CD4-positive, alpha-beta T cell (primary cell): ENCODE measurements at regions of chr13 and their contacts with region 1.

Region 1: DNA sequence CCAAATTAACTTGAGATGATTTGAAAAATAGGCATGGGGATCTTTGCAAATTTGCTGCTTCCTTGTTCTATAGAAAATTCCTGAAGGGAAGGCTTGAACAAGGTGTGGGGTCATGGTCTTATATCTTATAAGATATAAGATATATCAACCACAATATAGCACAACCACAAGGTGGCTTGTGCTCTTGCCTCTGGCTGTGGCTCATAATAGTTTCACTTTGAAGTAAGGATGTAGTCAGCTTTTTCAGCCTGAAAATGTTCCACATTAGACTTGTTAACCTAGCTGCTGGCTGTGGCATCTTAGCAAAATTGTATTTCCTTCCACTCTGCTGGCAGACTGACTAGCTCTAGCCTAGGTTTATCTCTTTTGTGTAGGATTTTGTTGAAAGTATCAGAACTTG is 169.7 kb downstream of the KLF5 start:
- DNase-seq: peak in 4 of 14 experiments; percentile 16 to 71 (median 52)
- ATAC-seq: peak; percentile 67
- H3K4me3 ChIP-seq: no peak overlapping the region
- H3K4me3 Mint-ChIP-seq: no peak overlapping the region
- H3K27ac ChIP-seq: peak overlapping the region in 1 of 2 donors; percentile 32
- H3K27ac Mint-ChIP-seq: peak overlapping the region; percentile 79
- H3K4me1 ChIP-seq: peaks cover 32% of the 10 kb centered on the region
- H3K4me1 Mint-ChIP-seq: peaks cover 57% of the 10 kb centered on the region
- H3K27me3 ChIP-seq: no peaks in the 10 kb centered on the region
- H3K27me3 Mint-ChIP-seq: no peaks in the 10 kb centered on the region
- CTCF ChIP-seq: peak; percentile 28

Region 2: DNA sequence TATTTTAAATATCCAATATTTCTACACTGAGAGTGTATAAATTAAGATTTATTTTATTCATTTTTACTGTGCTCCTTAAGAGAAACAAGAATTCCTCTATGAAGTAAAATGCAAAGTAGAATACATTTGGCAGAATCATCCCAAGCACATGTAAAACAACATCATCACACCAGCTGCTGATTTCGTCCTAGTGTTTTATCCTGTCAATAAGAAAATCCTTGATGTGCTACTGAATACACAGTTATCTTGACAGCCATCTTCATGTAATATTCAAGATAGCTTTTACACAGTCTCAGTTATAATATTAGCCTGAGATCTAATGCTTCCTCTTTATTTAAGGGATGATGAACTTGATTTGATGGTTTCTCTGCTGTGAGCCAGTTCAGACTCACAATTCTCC is 783.5 kb before region 1 on chr13:
- CTCF ChIA-PET with region 1: no interaction called
- POLR2A ChIA-PET with region 1: no interaction called
- intact Hi-C with region 1: no loop called
- DNase-seq: no peak
- ATAC-seq: no peak
- H3K4me3 ChIP-seq: no peak overlapping the region
- H3K4me3 Mint-ChIP-seq: no peak overlapping the region
- H3K27ac ChIP-seq: no peak overlapping the region
- H3K27ac Mint-ChIP-seq: no peak overlapping the region
- H3K4me1 ChIP-seq: no peaks in the 10 kb centered on the region
- H3K4me1 Mint-ChIP-seq: no peaks in the 10 kb centered on the region
- H3K27me3 ChIP-seq: no peaks in the 10 kb centered on the region
- H3K27me3 Mint-ChIP-seq: no peaks in the 10 kb centered on the region
- CTCF ChIP-seq: no peak

Region 3: DNA sequence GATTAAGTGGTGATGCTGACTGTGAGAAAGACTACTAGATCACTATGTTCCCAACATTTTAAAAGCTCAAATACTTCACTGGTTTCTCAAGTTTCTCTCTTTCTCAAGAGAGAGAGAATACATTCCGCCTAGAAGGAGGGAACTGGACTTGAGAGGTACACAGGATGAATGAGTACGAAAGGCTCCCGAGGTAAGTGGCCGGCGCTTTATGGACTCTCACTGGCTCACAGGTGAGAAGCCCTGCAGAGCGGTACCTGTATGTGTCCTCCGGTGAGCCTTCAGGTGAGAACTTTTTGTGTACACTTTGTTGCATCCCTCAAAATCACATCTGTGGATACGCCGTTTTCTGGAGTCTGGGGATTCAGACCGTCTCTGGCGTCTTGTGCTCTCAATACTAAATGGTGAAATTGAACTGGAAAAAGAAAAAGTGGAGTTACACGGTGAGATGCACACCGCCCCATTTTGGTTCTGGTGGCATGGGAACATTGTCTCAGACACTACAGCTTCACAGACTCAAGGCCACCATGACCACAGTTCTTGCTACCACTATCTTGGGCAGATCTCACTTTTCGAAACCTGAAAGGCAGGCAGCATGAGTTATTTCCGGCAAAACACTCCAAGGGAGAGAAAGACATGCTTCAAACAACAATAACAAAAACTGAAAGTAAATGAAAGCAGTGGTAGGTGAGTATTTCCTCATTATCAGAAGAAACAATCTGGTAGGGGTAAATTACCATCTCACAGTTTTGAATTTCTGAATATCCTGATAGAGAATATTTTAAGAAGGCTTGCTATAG is 486.8 kb after region 1 on chr13:
- CTCF ChIA-PET with region 1: no interaction called
- POLR2A ChIA-PET with region 1: no interaction called
- intact Hi-C with region 1: loop called in 1 of 2 experiments (anchors 5 kb)
- DNase-seq: peak; percentile 21 to 94 (median 46)
- ATAC-seq: peak; percentile 88
- H3K4me3 ChIP-seq: peak overlapping the region; percentile 34
- H3K4me3 Mint-ChIP-seq: peak overlapping the region; percentile 73
- H3K27ac ChIP-seq: peak overlapping the region; percentile 62 to 73
- H3K27ac Mint-ChIP-seq: peak overlapping the region; percentile 94
- H3K4me1 ChIP-seq: peaks cover 35% of the 10 kb centered on the region
- H3K4me1 Mint-ChIP-seq: peaks cover 53% of the 10 kb centered on the region
- H3K27me3 ChIP-seq: no peaks in the 10 kb centered on the region
- H3K27me3 Mint-ChIP-seq: no peaks in the 10 kb centered on the region
- CTCF ChIP-seq: no peak

Region 4: DNA sequence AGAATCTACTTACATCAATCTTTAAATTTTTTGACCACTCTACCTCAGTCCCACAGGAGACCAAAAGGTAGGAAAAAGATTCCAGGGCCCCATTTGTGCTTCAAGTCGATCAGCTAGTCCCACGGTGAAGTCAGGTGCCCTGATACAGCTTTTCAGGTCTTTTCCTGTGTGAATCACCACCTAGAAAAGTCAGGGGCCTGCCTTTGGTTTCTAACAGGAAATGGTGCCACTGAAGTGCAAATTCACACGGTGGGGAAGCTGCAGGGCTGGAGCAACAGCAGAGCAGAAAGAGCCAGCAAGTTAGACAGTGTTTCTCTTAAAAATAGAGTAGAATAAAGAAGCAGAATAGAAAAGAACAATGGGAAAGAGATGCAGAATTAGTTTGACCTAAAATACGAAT is 798.2 kb after region 1 on chr13:
- CTCF ChIA-PET with region 1: no interaction called
- POLR2A ChIA-PET with region 1: no interaction called
- intact Hi-C with region 1: no loop called
- DNase-seq: peak; percentile 44 to 88 (median 66)
- ATAC-seq: peak; percentile 95
- H3K4me3 ChIP-seq: peak overlapping the region; percentile 29
- H3K4me3 Mint-ChIP-seq: peak overlapping the region; percentile 82
- H3K27ac ChIP-seq: peak overlapping the region; percentile 66 to 78
- H3K27ac Mint-ChIP-seq: peak overlapping the region; percentile 89
- H3K4me1 ChIP-seq: peaks cover 11% of the 10 kb centered on the region
- H3K4me1 Mint-ChIP-seq: peaks cover 90% of the 10 kb centered on the region
- H3K27me3 ChIP-seq: no peaks in the 10 kb centered on the region
- H3K27me3 Mint-ChIP-seq: no peaks in the 10 kb centered on the region
- CTCF ChIP-seq: no peak